ENCODE measurements at regions of chr15 and their contacts with region 1.

Region 1: GRCh38 chr15:69462493-69463181 is 10.0 kb downstream of the RPLP1 start:
- DNase-seq: peak; percentile 94
- ATAC-seq: peak; percentile 94
- H3K4me3 Mint-ChIP-seq: peak overlapping the region; percentile 78
- H3K27ac Mint-ChIP-seq: peak overlapping the region; percentile 75
- H3K4me1 Mint-ChIP-seq: peaks cover 30% of the 10 kb centered on the region
- H3K27me3 Mint-ChIP-seq: peaks cover 22% of the 10 kb centered on the region

Region 2: GRCh38 chr15:69415381-69415780 is 47.3 kb before region 1 on chr15:
- CTCF ChIA-PET with region 1: interaction called, 16 read pairs
- DNase-seq: no peak
- ATAC-seq: no peak
- H3K4me3 Mint-ChIP-seq: peak overlapping the region; percentile 88
- H3K27ac Mint-ChIP-seq: no peak overlapping the region
- H3K4me1 Mint-ChIP-seq: peaks cover 23% of the 10 kb centered on the region
- H3K27me3 Mint-ChIP-seq: peaks cover 2% of the 10 kb centered on the region

Region 3: GRCh38 chr15:69443032-69443611 is 19.5 kb before region 1 on chr15:
- CTCF ChIA-PET with region 1: interaction called, 11 read pairs
- DNase-seq: no peak
- ATAC-seq: peak; percentile 77
- H3K4me3 Mint-ChIP-seq: peak overlapping the region; percentile 23
- H3K27ac Mint-ChIP-seq: peak overlapping the region; percentile 60
- H3K4me1 Mint-ChIP-seq: peaks cover 16% of the 10 kb centered on the region
- H3K27me3 Mint-ChIP-seq: no peaks in the 10 kb centered on the region

Region 4: DNA sequence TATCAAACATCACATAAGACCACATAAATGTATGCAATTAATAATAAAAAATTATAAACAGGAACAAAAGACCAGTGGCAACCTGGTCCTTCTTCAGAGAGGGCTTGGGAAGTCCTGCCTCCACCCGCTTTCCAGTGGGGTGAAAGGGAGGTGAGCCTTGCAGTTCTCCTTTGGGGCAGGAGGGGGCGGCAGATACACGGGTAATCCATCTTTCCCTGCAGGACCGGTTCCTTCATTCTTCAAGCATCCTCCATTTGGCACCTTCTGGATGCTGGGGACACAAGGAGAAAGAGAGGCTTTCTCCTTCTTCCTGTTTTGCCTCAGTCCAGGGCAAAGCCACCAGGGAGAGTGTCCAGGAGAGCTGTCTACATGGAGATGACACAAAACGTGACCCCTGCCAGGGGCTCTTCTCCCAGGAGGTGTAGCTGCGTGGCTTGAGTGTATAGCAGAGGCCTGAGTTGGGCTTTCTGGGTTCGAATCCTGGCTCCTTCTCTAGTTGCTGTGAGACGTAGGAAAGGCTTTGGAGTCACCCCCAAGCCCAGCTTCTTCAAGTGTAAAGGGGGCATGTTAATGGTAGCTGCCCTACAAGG is 13.2 kb after region 1 on chr15:
- CTCF ChIA-PET with region 1: interaction called, 19 read pairs
- DNase-seq: peak; percentile 77
- ATAC-seq: peak; percentile 83
- H3K4me3 Mint-ChIP-seq: no peak overlapping the region
- H3K27ac Mint-ChIP-seq: no peak overlapping the region
- H3K4me1 Mint-ChIP-seq: peaks cover 5% of the 10 kb centered on the region
- H3K27me3 Mint-ChIP-seq: peaks cover 56% of the 10 kb centered on the region

Measured in activated CD8-positive, alpha-beta memory T cell treated with anti-CD3 and anti-CD28 coated beads, Interleukin-2, amount 10 ng/mL, durations not matched to agents 7 days and 5 days (primary cell).